ENCODE measurements at regions of chr2 and their contacts with region 1.

Region 1: DNA sequence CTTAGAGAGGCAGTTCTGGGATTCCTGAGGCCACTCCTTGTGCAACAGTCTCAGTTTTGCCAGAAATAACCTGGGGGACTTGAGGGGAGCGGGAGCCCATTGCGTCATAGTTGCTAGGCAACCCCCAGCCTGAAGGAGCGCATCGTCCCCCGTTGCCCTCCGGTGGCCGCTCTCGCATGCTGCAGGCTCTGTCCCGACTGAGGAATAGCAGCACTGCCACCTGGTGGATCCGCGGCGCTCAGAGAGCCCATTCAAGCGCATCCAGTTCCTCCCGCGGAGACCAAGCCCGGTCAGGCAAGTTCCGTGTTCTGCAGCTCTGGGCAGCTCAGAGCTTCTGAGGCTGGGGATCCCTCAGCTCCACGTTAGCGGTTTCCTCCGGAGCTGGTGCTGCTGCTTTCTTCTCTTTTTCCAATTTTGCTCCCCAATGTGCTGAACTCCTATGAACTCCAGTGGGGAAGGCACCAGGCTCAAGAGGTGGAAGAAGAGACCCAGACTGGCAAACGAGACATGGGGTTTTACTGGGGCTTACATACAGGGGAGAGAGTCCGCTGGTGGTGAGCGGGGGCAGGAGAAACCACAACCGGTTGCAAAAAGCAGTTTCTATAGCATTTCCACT is 15.1 kb downstream of the SLC4A3 start:
- DNase-seq: peak; percentile 88 to 98
- H3K4me3 ChIP-seq: no peak overlapping the region
- H3K27ac ChIP-seq: no peak overlapping the region
- H3K4me1 ChIP-seq: peaks cover 20% of the 10 kb centered on the region
- H3K27me3 ChIP-seq: no peaks in the 10 kb centered on the region
- CTCF ChIP-seq: peak; percentile 98 to 100 (median 98)
- POLR2A ChIP-seq: no peak

Region 2: DNA sequence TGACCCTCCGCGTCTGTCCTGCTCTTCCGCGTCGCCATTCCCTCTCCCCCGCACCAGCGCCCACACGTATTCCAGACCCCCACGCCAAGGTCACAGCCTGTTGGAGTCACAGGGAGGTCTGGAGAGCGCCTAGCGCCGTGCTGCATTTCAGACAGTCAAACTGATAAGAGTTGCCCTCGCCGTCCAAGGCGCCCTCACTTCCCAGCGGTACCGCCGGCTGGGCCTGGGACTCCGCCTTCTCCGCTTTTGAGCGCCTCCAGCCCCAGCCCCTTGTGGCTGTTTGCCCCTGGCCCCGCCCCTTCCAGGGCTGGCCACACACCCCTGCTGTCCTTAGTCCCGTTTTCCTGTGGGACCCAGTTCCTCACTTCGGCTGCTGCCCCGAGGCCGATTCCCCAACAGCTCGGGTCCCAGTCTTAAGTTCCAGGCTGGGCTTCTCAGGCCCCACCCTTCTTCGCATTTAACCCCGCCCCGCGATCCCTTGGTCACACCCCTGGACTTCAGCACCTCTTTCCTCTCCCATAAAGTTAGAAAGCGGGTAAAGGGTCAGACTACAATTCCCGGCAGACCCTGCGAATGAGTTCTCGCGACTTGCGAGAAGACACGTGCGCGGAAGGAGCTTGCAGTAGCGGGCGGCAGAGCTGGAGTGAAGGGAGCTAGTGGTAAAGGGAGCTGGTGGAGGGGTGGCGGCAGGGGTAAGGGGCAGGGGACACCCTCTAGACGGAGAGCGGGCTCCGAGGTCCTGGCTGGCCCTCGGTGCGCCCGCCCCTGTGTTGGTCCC is 144.1 kb before region 1 on chr2 and contains the start of gene GMPPA:
- intact Hi-C with region 1: loop called (anchors 5 kb)
- DNase-seq: peak; percentile 98 to 99
- H3K4me3 ChIP-seq: peak within 1 kb of the TSS; percentile 71 to 84
- H3K27ac ChIP-seq: peak within 1 kb of the TSS; percentile 95
- H3K4me1 ChIP-seq: peaks cover 35% of the 10 kb centered on the region
- H3K27me3 ChIP-seq: no peaks in the 10 kb centered on the region
- CTCF ChIP-seq: no peak
- POLR2A ChIP-seq: peak in 1 of 2 donors; percentile 70
- total RNA-seq, gene GMPPA: 35.4 TPM

Region 3: GRCh38 chr2:219543601-219544358 is 98.8 kb before region 1 on chr2 and contains the starts of genes CHPF and TMEM198:
- intact Hi-C with region 1: loop called (anchors 5 kb)
- DNase-seq: peak; percentile 98 to 99
- H3K4me3 ChIP-seq: peak within 1 kb of the TSS; percentile 62 to 64
- H3K27ac ChIP-seq: peak within 1 kb of the TSS; percentile 87
- H3K4me1 ChIP-seq: peaks cover 33% of the 10 kb centered on the region
- H3K27me3 ChIP-seq: no peaks in the 10 kb centered on the region
- CTCF ChIP-seq: no peak
- POLR2A ChIP-seq: peak in 1 of 2 donors; percentile 69
- total RNA-seq, gene CHPF: 41.5 TPM
- total RNA-seq, gene TMEM198: 1.5 TPM

Region 4: DNA sequence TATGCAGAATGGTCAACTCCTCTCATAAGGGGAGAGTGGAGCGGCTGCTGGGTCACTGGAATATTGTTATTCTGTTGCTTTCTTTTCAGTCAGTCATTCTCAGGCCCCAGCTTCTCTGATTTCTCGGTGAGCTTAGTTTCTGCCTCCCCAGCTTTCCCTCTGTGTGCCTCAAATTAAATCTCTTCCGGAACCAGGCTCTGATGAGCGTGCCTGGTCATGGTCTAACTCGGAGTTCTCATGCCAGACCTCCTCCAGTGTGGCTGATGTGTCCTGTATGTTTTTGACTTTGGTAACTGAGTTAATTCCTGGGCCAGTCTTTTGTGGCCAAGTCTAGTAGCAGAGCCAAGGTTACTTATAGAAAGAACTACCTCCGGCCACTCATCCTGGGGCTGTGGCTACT is 49.8 kb before region 1 on chr2:
- intact Hi-C with region 1: no loop called
- DNase-seq: no peak
- H3K4me3 ChIP-seq: no peak overlapping the region
- H3K27ac ChIP-seq: no peak overlapping the region
- H3K4me1 ChIP-seq: peaks cover 8% of the 10 kb centered on the region
- H3K27me3 ChIP-seq: no peaks in the 10 kb centered on the region
- CTCF ChIP-seq: no peak
- POLR2A ChIP-seq: no peak

Region 5: DNA sequence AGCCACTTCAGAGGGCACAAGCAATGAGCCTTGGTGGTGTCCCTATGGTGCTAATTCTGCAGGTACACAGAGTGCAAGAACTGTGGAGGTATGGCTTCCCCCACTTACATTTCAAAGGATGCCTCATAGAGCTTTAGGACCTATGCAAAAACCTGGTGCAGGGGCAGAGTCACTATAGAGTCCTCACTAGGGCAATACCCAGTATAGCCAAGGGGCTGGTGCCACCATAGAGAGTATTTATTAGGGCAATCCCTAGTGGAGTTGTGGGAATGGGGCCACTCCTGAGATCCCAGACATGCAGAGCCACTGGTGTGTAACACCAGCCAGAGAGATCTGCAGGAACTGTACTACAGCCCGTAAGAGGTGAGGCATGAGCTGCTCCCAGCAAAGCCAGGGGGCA is 297.1 kb after region 1 on chr2:
- intact Hi-C with region 1: no loop called
- DNase-seq: no peak
- H3K4me3 ChIP-seq: no peak overlapping the region
- H3K27ac ChIP-seq: no peak overlapping the region
- H3K4me1 ChIP-seq: no peaks in the 10 kb centered on the region
- H3K27me3 ChIP-seq: no peaks in the 10 kb centered on the region
- CTCF ChIP-seq: no peak
- POLR2A ChIP-seq: no peak

Measured in vagina (tissue), 2 donors.